ENCODE measurements at regions of chr9 and their contacts with region 1.

Region 1: GRCh38 chr9:127734747-127735529 is at the start of gene TOR2A:
- DNase-seq: peak; percentile 81
- ATAC-seq: peak; percentile 98
- H3K4me3 ChIP-seq: peak within 1 kb of the TSS; percentile 76
- H3K27ac ChIP-seq: peak within 1 kb of the TSS; percentile 71
- H3K4me1 ChIP-seq: peaks cover 6% of the 10 kb centered on the region
- H3K27me3 ChIP-seq: no peaks in the 10 kb centered on the region
- CTCF ChIP-seq: peak; percentile 96 to 99 (median 96)
- EP300 ChIP-seq: peak in 1 of 2 experiments; percentile 62; a peak in 1 of 4 replicates
- POLR2A ChIP-seq: peak; percentile 93
- RAD21 ChIP-seq: peak; percentile 96
- polyA plus RNA-seq, gene TOR2A: 0.52 to 1.6 TPM

Region 2: DNA sequence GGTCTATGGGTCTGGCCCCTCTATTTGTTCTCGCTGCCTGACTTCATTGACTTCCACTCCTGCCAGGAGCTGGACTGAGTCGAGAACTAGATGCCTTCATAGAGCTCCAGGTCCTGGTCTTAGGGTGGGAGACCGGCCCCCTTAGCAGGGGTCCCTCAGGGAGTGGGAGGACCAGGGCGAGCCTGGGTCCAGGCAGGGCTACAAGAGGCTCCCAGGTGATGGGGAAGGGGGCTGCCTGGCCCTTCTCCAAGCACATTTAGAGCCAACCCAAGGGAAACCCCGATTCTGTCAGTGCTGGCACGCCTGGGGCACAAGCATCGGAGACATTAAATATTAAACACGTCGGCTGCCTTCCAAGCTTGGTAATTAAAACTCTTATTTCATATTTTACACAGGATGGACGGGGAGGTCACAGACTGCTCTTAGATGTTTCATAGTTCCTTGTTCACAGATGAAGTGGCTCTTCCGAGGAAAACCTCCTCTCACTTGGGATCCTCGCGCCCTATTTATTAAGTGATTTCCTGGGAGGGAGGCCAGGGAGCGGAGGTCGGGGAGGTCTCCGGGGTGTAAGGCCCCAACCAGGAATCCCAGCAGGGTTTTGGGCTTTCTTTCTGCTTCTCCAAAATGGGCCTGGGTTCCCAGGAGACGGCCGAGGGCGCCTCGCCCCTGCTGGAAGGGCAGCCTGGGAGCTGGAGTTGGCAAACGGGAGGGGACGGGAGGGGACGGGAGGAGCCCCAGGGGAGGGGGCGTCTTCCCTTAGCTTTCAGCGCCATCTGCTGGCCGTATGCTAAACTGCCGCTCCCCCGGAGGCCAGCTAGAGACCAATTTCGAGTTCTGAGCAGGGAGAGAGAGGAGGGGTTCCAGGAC is 953.5 kb before region 1 on chr9:
- CTCF ChIA-PET with region 1: no interaction called
- POLR2A ChIA-PET with region 1: no interaction called
- RAD21 ChIA-PET with region 1: no interaction called
- SMC1A ChIA-PET with region 1: no interaction called
- in situ Hi-C with region 1: no loop called
- intact Hi-C with region 1: no loop called
- DNase-seq: no peak
- ATAC-seq: peak; percentile 99
- H3K4me3 ChIP-seq: no peak overlapping the region
- H3K27ac ChIP-seq: no peak overlapping the region
- H3K4me1 ChIP-seq: no peaks in the 10 kb centered on the region
- H3K27me3 ChIP-seq: no peaks in the 10 kb centered on the region; a peak in 1 of 4 replicates
- CTCF ChIP-seq: peak; percentile 91 to 92 (median 91); a peak in 5 of 6 replicates
- EP300 ChIP-seq: no peak
- POLR2A ChIP-seq: no peak
- RAD21 ChIP-seq: peak; percentile 88

Region 3: GRCh38 chr9:127083138-127083980 is 651.6 kb before region 1 on chr9:
- CTCF ChIA-PET with region 1: no interaction called
- POLR2A ChIA-PET with region 1: no interaction called
- RAD21 ChIA-PET with region 1: no interaction called
- SMC1A ChIA-PET with region 1: no interaction called
- in situ Hi-C with region 1: no loop called
- intact Hi-C with region 1: no loop called
- DNase-seq: no peak
- ATAC-seq: no peak
- H3K4me3 ChIP-seq: no peak overlapping the region
- H3K27ac ChIP-seq: no peak overlapping the region
- H3K4me1 ChIP-seq: no peaks in the 10 kb centered on the region
- H3K27me3 ChIP-seq: no peaks in the 10 kb centered on the region
- CTCF ChIP-seq: no peak
- EP300 ChIP-seq: no peak
- POLR2A ChIP-seq: no peak
- RAD21 ChIP-seq: no peak

Region 4: GRCh38 chr9:127503947-127504782 is 230.8 kb before region 1 on chr9:
- CTCF ChIA-PET with region 1: interaction called, 5 read pairs
- POLR2A ChIA-PET with region 1: no interaction called
- RAD21 ChIA-PET with region 1: interaction called, 13 read pairs
- SMC1A ChIA-PET with region 1: interaction called, 8 read pairs
- in situ Hi-C with region 1: loop called (anchors 5 kb)
- intact Hi-C with region 1: loop called (anchors 1 kb)
- DNase-seq: no peak
- ATAC-seq: peak; percentile 89
- H3K4me3 ChIP-seq: no peak overlapping the region
- H3K27ac ChIP-seq: no peak overlapping the region
- H3K4me1 ChIP-seq: no peaks in the 10 kb centered on the region
- H3K27me3 ChIP-seq: no peaks in the 10 kb centered on the region
- CTCF ChIP-seq: peak; percentile 84 to 94 (median 93)
- EP300 ChIP-seq: no peak
- POLR2A ChIP-seq: no peak
- RAD21 ChIP-seq: peak; percentile 82

Region 5: DNA sequence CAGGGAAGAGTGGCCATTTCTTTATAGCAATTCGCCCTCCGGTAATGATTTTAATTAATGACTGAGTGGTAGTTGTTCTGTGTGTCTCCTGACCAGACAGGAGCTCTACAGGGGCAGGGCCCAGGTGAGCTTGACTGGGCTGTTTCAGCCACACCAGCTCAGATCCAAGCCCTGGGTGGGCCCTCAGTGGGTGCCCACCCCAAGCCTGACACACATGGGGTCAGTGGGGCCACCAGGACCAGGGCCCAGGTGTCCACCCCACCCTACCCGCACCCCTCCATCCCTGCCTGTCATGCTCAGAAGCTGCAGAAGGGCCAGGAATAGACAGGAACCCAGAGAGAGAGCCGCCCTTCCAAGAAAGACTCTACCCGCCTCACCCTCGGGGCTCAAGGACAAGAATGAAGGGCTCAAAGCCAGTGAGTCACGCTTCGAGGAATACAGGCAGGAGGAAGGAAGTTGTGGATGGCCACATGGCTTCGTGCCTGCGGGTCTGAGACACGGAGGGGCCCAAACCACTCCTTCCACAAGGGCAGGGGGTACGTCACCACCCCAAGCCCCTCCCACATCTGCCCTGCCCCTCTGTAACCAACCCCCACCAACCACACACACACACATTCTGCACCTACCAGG is 179.1 kb before region 1 on chr9:
- CTCF ChIA-PET with region 1: no interaction called
- POLR2A ChIA-PET with region 1: no interaction called
- RAD21 ChIA-PET with region 1: no interaction called
- SMC1A ChIA-PET with region 1: no interaction called
- in situ Hi-C with region 1: no loop called
- intact Hi-C with region 1: no loop called
- DNase-seq: peak; percentile 24
- ATAC-seq: peak; percentile 76
- H3K4me3 ChIP-seq: no peak overlapping the region
- H3K27ac ChIP-seq: no peak overlapping the region
- H3K4me1 ChIP-seq: no peaks in the 10 kb centered on the region
- H3K27me3 ChIP-seq: no peaks in the 10 kb centered on the region
- CTCF ChIP-seq: no peak
- EP300 ChIP-seq: no peak
- POLR2A ChIP-seq: no peak
- RAD21 ChIP-seq: no peak

Region 6: DNA sequence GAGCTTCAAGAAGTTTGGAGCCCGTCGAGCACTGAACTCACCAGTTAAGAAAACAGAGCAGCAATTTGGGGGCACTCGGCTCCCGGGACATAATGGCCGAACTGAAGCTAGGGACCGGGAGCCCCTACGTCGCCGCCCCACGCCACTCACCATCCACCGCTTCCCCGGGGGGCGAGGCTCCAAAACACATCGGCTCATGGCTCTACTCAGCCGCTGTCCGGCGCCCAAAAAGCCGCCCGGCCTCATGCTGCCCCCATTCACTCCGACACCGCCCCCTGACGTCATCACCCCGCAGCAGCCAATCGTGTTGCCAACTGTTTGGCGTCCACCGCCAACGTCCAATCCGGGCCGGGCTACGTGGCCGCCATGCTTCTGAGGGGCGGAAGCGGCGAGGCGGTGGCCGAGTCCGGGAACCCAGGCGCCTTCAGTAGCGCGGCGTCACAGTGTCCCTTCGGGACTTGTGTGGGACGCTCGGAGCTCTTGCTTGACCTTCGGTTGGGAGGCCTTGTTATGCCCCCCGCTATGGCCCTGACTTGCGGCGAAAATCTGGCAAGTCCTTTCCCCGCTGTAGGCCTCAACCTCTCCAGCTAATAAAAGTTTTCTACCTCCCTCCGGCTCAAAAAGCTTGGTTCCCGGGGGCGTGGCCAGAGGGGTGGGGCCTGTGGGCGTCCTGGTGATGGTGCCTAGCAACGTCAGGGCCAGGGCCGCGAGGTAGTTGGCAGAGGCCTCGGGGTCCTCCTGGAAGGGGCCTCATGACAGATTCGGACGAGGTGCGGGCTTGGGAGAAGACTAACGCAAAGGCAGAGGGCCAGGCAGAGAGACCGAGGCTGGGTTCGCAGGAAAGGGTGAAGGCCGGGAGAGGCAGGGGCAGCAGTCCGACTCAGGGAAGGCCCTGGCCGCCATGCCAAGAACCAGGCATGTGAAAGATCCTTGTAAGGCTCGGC is 19.3 kb before region 1 on chr9 and contains the starts of genes PTRH1 and TTC16:
- CTCF ChIA-PET with region 1: interaction called, 21 read pairs
- POLR2A ChIA-PET with region 1: no interaction called
- RAD21 ChIA-PET with region 1: interaction called, 19 read pairs
- SMC1A ChIA-PET with region 1: interaction called, 6 read pairs
- in situ Hi-C with region 1: no loop called
- intact Hi-C with region 1: no loop called
- DNase-seq: peak; percentile 72
- ATAC-seq: peak; percentile 98
- H3K4me3 ChIP-seq: peak within 1 kb of the TSS; percentile 74
- H3K27ac ChIP-seq: no peak within 1 kb of the TSS; the same call in 1 of the 2 replicates
- H3K4me1 ChIP-seq: peaks cover 6% of the 10 kb centered on the region; the same call in 1 of the 2 replicates
- H3K27me3 ChIP-seq: no peaks in the 10 kb centered on the region
- CTCF ChIP-seq: no peak
- EP300 ChIP-seq: no peak
- POLR2A ChIP-seq: peak; percentile 65
- RAD21 ChIP-seq: no peak
- polyA plus RNA-seq, gene PTRH1: 0.69 to 1.8 TPM
- polyA plus RNA-seq, gene TTC16: not detected

Region 7: DNA sequence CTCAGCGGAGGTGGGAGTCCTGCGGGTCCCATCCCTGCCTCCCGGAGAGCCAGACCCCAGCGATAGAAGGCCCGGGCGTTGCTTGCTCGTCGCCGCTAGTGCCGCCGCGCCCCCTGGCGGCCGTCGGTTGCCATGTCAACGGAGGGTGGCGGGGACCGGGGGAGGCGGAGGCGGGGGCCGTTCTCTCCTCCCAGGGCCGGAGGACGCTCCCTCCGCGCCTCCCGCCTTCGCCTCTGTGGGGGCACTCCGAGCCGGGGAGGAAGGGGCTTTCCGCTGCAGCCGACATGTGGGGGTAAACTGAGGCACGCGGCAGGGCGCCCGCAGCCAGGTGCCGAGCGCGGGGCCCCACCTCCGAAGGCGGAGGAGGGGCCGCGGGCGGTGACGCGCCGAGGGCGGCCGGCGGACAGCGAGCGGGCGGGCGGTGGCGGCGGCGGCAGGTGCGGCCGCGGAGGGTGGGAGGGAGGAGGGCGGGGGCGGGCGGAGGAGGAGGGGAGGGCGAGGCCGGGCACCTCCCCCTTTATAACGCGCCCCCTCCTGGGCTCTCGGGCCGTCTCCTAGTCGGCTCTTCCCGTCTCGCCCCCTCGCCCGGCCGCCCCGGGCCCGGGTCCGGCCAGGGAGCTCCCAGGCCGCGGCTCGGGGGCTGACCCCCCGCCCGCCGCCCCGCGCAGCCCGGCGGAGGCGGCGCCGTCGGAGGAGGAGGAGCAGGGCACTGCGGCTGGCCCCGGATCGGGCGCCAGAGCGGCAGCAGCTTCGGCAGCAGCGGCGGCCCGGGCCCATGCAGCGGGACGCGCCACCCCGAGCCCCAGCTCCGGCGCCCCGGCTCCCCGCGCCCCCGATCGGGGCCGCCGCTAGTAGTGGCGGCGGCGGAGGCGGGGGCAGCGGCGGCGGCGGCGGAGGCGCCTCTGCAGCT is 50.3 kb after region 1 on chr9:
- CTCF ChIA-PET with region 1: interaction called, 63 read pairs
- POLR2A ChIA-PET with region 1: interaction called, 13 read pairs
- RAD21 ChIA-PET with region 1: interaction called, 37 read pairs
- SMC1A ChIA-PET with region 1: interaction called, 16 read pairs
- in situ Hi-C with region 1: no loop called
- intact Hi-C with region 1: loop called (anchors 1 kb)
- DNase-seq: no peak
- ATAC-seq: peak; percentile 59
- H3K4me3 ChIP-seq: peak overlapping the region; percentile 85
- H3K27ac ChIP-seq: peak overlapping the region; percentile 82
- H3K4me1 ChIP-seq: peaks cover 41% of the 10 kb centered on the region
- H3K27me3 ChIP-seq: no peaks in the 10 kb centered on the region
- CTCF ChIP-seq: peak; percentile 65 to 89 (median 82)
- EP300 ChIP-seq: no peak
- POLR2A ChIP-seq: peak; percentile 44
- RAD21 ChIP-seq: peak; percentile 78

Region 8: DNA sequence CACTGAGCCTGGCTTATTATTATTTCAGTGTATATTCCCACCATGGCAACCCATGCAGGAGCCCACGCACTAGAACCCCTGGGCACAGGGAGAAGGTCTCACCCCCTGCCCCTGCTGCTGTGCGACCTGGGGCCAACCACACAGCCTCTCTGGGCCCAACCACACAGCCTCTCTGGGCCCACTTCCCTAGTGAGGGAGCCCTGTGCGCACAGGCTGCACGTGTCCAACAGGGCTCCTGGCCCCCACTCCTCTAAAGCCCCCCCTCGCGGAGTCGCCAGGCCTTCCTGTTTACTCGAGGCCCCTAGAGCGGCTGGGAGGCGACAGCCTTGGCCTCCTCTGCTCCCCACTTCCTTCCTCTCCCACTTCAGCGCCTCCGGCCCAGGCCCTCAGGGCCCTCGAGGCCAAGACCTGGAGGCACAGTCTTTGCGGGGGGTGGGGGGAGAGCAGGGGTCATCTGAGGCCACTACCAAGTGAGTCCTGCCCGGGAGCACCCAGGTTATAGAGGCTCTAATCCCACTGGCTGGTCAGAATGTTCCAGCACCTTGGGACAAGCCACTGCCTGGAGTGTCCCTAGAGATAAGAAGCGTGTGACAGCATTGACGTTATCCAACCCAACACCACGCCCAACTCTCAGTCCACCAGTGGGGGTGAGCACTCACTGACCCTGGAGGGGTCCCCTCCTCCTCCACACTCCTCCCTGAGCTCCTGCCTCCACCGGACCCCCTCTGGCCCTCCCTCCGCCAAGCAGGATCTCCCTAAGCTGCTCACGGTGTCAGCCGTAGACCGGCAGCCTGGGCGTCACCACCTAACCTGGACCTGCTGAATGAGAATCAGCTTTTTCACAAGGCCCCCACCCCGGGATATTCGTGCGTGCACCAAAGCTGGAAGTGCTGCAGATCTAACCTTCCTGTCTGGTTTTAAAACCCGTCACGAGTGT is 127.4 kb after region 1 on chr9:
- CTCF ChIA-PET with region 1: interaction called, 14 read pairs
- POLR2A ChIA-PET with region 1: no interaction called
- RAD21 ChIA-PET with region 1: interaction called, 15 read pairs
- SMC1A ChIA-PET with region 1: interaction called, 8 read pairs
- in situ Hi-C with region 1: no loop called
- intact Hi-C with region 1: no loop called
- DNase-seq: no peak
- ATAC-seq: peak; percentile 19
- H3K4me3 ChIP-seq: no peak overlapping the region
- H3K27ac ChIP-seq: no peak overlapping the region
- H3K4me1 ChIP-seq: peaks cover 31% of the 10 kb centered on the region
- H3K27me3 ChIP-seq: no peaks in the 10 kb centered on the region
- CTCF ChIP-seq: no peak
- EP300 ChIP-seq: no peak
- POLR2A ChIP-seq: no peak
- RAD21 ChIP-seq: no peak

Region 9: GRCh38 chr9:127910613-127911205 is 175.8 kb after region 1 on chr9:
- CTCF ChIA-PET with region 1: interaction called, 79 read pairs
- POLR2A ChIA-PET with region 1: interaction called, 4 read pairs
- RAD21 ChIA-PET with region 1: interaction called, 83 read pairs
- SMC1A ChIA-PET with region 1: interaction called, 20 read pairs
- in situ Hi-C with region 1: loop called (anchors 5 kb)
- intact Hi-C with region 1: no loop called
- DNase-seq: no peak
- ATAC-seq: no peak
- H3K4me3 ChIP-seq: peak overlapping the region; percentile 35; the same call in 1 of the 2 replicates
- H3K27ac ChIP-seq: peak overlapping the region; percentile 86
- H3K4me1 ChIP-seq: peaks cover 54% of the 10 kb centered on the region
- H3K27me3 ChIP-seq: no peaks in the 10 kb centered on the region
- CTCF ChIP-seq: peak; percentile 20 to 49 (median 33); a peak in 4 of 6 replicates
- EP300 ChIP-seq: no peak
- POLR2A ChIP-seq: no peak
- RAD21 ChIP-seq: peak; percentile 41; the same call in 1 of the 2 replicates

Measured in GM12878 (cell line).